RWPE1 (cell line): ENCODE measurements at regions of chr9 and their contacts with region 1.

Region 1: DNA sequence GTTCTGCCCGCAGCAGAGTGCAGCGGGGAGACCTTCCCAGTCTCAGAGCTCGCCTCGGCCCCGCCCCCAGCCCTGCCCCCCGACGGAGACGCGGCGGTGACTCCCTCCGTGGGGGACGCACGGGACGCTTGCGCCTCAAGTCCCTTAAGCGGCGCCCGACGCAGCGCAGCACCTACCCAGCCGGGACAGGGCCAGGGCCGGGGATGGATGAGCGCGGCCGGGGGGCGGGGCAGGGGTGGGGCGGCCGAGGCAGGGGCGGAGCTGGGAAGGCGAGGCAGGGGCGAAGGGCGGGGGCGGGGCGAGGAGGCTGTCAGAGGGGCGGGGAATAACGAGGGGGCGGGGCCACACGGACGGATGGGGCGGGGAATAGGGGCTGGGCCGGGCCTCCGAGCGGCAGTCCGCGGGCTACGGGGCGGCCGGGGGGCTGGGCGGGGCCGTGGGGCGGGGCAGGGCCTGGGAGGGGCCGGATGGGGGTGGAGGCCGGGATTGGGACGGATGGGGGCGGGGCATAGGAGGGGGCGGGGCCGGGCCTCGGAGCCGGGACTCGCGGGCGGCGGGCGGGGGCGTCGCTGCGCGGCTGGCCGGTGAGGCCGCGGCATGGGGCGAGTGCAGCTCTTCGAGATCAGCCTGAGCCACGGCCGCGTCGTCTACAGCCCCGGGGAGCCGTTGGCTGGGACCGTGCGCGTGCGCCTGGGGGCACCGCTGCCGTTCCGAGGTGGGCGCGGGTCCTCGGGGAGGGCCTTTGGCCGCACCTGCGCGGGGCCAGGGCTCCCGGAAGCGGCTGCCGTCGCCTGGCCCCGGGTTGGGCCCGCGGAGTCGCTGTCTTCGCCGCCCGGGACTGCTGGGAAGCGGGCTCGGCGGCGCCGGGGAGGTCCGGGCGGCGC is at the start of gene ARRDC1:
- DNase-seq: peak; percentile 98
- H3K27ac ChIP-seq: peak within 1 kb of the TSS; percentile 100
- CTCF ChIP-seq: no peak

Region 2: DNA sequence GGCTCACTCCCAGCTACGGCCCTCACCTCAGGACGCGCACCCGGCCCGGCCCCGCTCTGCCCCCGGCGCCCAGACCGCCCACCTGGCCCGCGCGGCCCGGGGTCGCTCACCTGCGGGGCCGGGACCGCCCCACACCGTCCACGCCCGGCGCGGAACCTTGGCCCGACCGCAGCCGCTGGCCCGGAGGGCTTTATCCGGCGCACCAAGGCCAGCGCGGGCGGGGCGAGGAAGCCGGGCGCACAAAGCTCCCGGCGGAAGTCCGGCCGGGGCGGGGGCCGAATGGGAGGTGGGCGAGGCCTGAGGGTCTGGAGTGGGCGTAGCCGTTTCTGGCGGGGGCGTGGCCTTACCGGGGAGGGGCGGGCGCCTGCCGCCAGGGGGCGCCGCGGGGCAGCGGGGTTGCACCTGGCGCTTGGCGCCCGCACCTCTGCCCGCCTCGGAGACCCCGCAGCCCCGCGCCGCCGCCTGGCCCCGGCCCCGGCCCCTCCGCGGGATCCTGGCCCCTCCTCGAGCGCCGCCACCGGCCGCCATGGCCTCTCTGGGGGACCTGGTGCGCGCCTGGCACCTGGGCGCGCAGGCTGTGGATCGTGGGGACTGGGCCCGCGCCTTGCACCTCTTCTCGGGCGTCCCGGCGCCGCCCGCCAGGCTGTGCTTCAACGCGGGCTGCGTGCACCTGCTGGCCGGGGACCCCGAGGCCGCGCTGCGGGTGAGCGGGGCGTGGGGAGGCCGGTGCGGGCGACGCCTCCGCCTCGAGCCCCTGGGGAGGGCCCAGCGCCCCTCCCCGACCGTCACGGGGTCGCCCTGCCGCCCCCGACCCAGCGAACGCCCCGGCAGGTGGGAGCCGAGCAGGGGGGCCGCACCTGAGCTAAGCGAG is 182.1 kb before region 1 on chr9 and contains the starts of genes EXD3 and NOXA1:
- CTCF ChIA-PET with region 1: no interaction called
- POLR2A ChIA-PET with region 1: no interaction called
- DNase-seq: peak; percentile 98
- H3K27ac ChIP-seq: peak within 1 kb of the TSS; percentile 83
- CTCF ChIP-seq: peak; percentile 99

Region 3: DNA sequence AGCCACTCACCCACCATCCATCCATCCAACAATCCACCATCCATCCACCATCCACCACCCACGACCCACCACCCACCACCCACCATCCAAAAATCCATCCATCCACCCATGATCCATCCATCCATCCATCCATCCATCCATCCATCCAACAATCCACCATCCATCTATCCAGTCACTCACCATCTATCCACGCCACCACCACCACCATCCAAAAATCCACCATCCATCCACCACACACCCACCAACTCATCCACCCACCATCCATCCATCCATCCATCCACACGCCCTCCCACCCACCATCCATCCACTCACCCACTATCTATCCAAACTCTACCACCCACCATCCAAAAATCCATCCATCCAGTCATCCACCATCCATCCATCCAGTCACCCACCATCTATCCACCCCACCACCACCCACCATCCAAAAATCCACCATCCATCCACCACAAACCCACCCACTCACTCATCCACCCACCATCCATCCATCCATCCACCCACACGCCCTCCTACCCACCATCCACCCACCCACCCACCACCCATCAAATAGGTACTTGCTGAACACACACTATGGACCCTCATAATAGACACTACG is 35.7 kb before region 1 on chr9:
- CTCF ChIA-PET with region 1: no interaction called
- POLR2A ChIA-PET with region 1: no interaction called
- DNase-seq: no peak
- H3K27ac ChIP-seq: no peak overlapping the region
- CTCF ChIP-seq: no peak

Region 4: GRCh38 chr9:137618105-137619067 is 13.0 kb after region 1 on chr9 and contains the start of gene EHMT1:
- CTCF ChIA-PET with region 1: no interaction called
- POLR2A ChIA-PET with region 1: interaction called, 10 read pairs
- DNase-seq: peak; percentile 99
- H3K27ac ChIP-seq: peak within 1 kb of the TSS; percentile 100
- CTCF ChIP-seq: no peak